ENCODE measurements at regions of chr16 and their contacts with region 1.

Region 1: GRCh38 chr16:89171463-89172170 is at the start of gene CDH15:
- DNase-seq: peak; percentile 96
- H3K4me3 Mint-ChIP-seq: peak within 1 kb of the TSS; percentile 78
- H3K27ac Mint-ChIP-seq: peak within 1 kb of the TSS; percentile 69
- H3K4me1 Mint-ChIP-seq: peaks cover 6% of the 10 kb centered on the region
- H3K27me3 Mint-ChIP-seq: peaks cover 4% of the 10 kb centered on the region
- total RNA-seq, gene CDH15: not detected in 2 replicates

Region 2: DNA sequence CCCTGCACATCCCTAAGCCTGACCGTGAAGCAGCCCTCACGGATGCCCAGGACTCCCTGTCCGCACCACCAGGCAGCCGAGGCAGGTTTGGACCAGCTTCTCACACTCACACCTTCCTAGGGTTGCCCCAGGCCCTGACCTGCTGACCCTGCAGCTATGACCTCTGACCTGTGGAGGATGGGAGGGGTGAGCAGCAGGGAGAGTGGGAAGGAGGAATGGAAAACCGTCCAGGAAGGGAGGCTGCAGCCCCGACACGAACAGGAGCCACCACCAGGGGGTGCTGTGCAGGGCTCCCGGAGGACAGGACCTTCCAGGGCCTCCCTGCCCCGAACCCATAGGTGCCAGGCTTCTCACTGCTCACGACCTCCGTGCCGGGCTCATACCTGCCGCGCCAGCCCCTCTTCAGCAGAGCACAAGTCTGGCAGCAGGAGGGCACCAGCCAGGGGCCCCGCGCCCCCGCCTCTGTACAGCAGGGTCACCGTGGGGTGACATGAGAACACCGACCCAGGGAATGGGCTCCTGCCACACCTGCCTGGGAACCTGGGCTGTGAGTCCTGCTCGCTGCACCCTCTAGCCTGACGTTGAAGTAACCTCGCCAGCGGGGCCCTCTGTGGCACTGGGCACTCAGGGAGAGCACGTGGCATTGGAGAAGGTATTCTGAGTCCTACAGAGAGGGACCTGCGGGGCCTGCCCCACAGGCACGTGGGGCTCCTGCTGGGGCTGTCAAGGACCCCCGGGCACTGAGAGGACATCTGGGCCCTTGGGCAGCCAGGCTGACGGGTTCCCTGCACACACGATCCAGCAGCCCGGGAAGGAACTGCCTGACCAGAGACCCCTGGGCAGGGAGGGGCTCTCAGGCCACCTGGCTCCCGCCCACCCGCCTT is 427.7 kb before region 1 on chr16:
- intact Hi-C with region 1: loop called (anchors 10 kb)
- DNase-seq: peak; percentile 91
- H3K4me3 Mint-ChIP-seq: no peak overlapping the region
- H3K27ac Mint-ChIP-seq: no peak overlapping the region
- H3K4me1 Mint-ChIP-seq: peaks cover 23% of the 10 kb centered on the region
- H3K27me3 Mint-ChIP-seq: no peaks in the 10 kb centered on the region

Region 3: GRCh38 chr16:88811769-88812512 is 359.7 kb before region 1 on chr16 and contains the start of gene APRT:
- intact Hi-C with region 1: loop called (anchors 1 kb)
- DNase-seq: peak; percentile 99
- H3K4me3 Mint-ChIP-seq: peak within 1 kb of the TSS; percentile 89
- H3K27ac Mint-ChIP-seq: peak within 1 kb of the TSS; percentile 95
- H3K4me1 Mint-ChIP-seq: peaks cover 15% of the 10 kb centered on the region
- H3K27me3 Mint-ChIP-seq: no peaks in the 10 kb centered on the region
- total RNA-seq, gene APRT: 312 and 314 TPM in 2 replicates

Region 4: DNA sequence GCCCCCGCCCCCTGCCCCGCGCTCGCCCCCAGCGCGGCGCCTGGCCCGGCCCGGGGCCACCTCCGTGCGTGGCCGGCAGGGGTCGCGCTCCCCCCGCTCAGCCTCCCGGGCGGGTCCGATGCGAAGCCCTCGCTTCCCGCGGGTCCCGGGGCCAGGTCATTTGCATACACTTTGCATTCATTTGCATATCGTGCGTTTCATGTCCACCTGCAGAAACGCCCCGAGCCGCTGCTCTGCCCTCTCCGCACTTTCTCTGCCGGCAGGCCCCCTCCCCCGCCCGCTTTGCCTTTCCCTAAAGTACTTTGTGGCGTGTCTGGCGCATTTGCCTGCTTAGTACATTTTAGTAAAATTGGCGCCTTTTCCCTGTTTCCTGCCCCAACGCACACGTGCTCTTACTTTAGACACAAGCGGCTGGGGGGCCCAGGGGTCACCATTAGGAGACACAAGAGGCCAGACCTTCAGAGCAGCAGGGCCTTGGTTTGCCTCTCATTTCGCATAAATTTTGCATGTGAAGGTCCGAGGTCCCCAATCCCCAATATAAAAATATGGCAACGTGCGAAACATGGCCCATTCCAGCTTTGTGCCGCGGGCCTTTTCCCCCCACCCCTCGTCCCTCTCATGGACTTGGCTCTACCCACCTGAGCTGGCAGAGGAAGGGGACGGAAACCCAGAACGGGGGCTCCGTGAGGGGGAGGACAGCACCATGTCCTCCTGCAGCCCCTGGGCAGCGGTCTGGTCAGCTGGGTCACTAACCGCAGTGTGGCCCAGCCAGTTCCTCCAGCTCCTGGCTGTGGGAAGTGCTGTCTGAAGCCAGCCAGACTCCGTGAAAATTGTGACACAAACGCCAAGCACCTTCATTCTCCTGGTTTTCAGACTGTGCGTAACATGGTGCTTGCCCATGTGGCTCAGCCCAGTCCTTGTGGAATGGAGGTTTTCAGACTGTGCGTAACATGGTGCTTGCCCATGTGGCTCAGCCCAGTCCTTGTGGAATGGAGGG is 229.4 kb before region 1 on chr16:
- intact Hi-C with region 1: loop called (anchors 1 kb)
- DNase-seq: peak; percentile 85
- H3K4me3 Mint-ChIP-seq: peak overlapping the region; percentile 40
- H3K27ac Mint-ChIP-seq: no peak overlapping the region
- H3K4me1 Mint-ChIP-seq: no peaks in the 10 kb centered on the region
- H3K27me3 Mint-ChIP-seq: peaks cover 42% of the 10 kb centered on the region

Region 5: GRCh38 chr16:89193021-89193575 is 21.5 kb after region 1 on chr16:
- intact Hi-C with region 1: loop called (anchors 1 kb)
- DNase-seq: peak; percentile 82
- H3K4me3 Mint-ChIP-seq: no peak overlapping the region
- H3K27ac Mint-ChIP-seq: no peak overlapping the region
- H3K4me1 Mint-ChIP-seq: no peaks in the 10 kb centered on the region
- H3K27me3 Mint-ChIP-seq: no peaks in the 10 kb centered on the region

Region 6: GRCh38 chr16:89201439-89202377 is 30.1 kb after region 1 on chr16:
- intact Hi-C with region 1: loop called (anchors 2 kb)
- DNase-seq: peak; percentile 93
- H3K4me3 Mint-ChIP-seq: peak overlapping the region; percentile 56
- H3K27ac Mint-ChIP-seq: no peak overlapping the region
- H3K4me1 Mint-ChIP-seq: peaks cover 5% of the 10 kb centered on the region
- H3K27me3 Mint-ChIP-seq: peaks cover 31% of the 10 kb centered on the region

Region 7: DNA sequence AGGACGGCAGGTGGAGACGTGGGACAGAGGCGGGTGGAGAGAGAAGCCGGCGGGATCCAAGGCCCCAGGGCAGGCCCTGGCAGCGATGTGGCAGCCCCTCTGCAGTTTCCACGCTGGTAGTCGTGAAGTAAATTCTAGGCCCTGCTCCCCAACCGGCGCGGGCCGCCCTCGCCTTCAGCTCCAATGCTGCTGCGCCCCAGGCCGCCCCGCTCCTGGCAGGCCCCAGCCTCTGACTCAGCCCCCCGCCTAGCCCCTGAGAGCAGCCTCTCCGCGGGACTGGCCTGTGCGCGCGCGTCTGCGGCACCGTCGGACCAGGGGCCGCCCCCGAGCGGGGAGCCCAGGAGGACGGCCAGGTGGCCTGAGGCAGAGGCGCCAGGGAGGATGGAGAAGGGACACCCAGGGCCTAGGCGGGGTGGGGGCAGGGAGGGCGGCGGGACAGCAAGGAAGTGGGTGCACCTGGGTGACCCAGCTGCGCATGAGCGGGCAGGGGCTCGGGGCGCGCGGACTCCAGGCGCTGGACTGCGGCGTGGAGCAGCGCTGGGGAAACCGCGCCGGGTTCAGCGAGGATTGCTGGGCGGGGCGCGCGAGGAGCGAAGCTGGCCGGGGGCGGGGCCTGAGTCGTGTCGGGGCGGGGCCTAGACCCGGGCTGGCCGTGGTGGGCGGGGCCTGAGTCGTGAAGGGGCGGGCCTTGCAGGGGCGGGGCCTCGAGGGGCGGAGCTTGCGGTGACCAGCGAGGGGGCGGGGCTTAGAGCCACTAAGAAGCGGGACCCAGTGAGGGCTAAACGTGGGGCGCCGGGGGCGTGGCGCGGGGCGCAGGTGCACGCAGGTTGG is 75.5 kb after region 1 on chr16:
- intact Hi-C with region 1: loop called (anchors 1 kb)
- DNase-seq: peak; percentile 97
- H3K4me3 Mint-ChIP-seq: peak overlapping the region; percentile 76
- H3K27ac Mint-ChIP-seq: no peak overlapping the region
- H3K4me1 Mint-ChIP-seq: peaks cover 6% of the 10 kb centered on the region
- H3K27me3 Mint-ChIP-seq: peaks cover 4% of the 10 kb centered on the region

Measured in activated CD4-positive, alpha-beta T cell treated with anti-CD3 and anti-CD28 coated beads, Interleukin-2, amount 10 ng/mL, durations not matched to agents 24 days and 14 days (primary cell).